ENCODE measurements at regions of chr6 and their contacts with region 1.

Region 1: GRCh38 chr6:5302995-5303622 is 41.8 kb downstream of the FARS2 start:
- DNase-seq: peak; percentile 5 to 77 (median 57)
- ATAC-seq: peak; percentile 88
- H3K4me3 ChIP-seq: no peak overlapping the region
- H3K4me3 Mint-ChIP-seq: peak overlapping the region; percentile 68
- H3K27ac ChIP-seq: peak overlapping the region in 1 of 2 experiments; percentile 1
- H3K27ac Mint-ChIP-seq: peak overlapping the region; percentile 37
- H3K4me1 ChIP-seq: peaks cover 6% of the 10 kb centered on the region
- H3K4me1 Mint-ChIP-seq: peaks cover 37% of the 10 kb centered on the region
- H3K27me3 ChIP-seq: no peaks in the 10 kb centered on the region
- H3K27me3 Mint-ChIP-seq: no peaks in the 10 kb centered on the region
- CTCF ChIP-seq: peak; percentile 51

Region 2: GRCh38 chr6:5151955-5152401 is 151.1 kb before region 1 on chr6:
- CTCF ChIA-PET with region 1: interaction called, 14 read pairs
- POLR2A ChIA-PET with region 1: interaction called, 3 read pairs
- intact Hi-C with region 1: no loop called
- DNase-seq: no peak
- ATAC-seq: no peak
- H3K4me3 ChIP-seq: no peak overlapping the region
- H3K4me3 Mint-ChIP-seq: no peak overlapping the region
- H3K27ac ChIP-seq: no peak overlapping the region
- H3K27ac Mint-ChIP-seq: no peak overlapping the region
- H3K4me1 ChIP-seq: no peaks in the 10 kb centered on the region
- H3K4me1 Mint-ChIP-seq: no peaks in the 10 kb centered on the region
- H3K27me3 ChIP-seq: no peaks in the 10 kb centered on the region
- H3K27me3 Mint-ChIP-seq: no peaks in the 10 kb centered on the region
- CTCF ChIP-seq: no peak

Region 3: DNA sequence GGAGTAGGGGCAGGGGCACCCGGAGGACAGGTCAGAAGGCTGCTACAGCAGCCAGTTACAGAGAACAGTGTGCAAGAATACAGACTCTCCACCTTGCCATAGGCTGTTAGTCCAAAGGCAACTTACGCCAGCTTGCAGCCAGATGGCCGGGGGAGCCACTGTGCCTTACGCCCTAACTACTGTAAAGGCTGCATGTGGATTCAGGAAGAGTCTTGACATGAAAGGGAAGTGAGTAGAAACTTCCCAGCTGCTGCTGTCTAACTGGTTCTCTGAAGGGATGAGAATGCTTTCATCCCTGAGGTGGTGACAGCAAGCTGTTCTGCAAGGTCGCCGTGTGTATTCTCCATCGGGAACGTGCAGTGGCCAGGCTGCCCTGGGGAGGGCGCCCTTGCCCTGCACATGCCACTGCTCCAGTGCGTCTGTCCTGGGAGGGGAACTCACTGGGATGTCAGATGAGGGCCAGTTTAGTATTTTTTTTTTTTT is 88.5 kb before region 1 on chr6:
- CTCF ChIA-PET with region 1: interaction called, 5 read pairs
- POLR2A ChIA-PET with region 1: no interaction called
- intact Hi-C with region 1: loop called in 1 of 2 experiments (anchors 5 kb)
- DNase-seq: peak in 2 of 9 experiments; percentile 7 to 13
- ATAC-seq: no peak
- H3K4me3 ChIP-seq: no peak overlapping the region
- H3K4me3 Mint-ChIP-seq: no peak overlapping the region
- H3K27ac ChIP-seq: no peak overlapping the region
- H3K27ac Mint-ChIP-seq: no peak overlapping the region
- H3K4me1 ChIP-seq: no peaks in the 10 kb centered on the region
- H3K4me1 Mint-ChIP-seq: peaks cover 4% of the 10 kb centered on the region
- H3K27me3 ChIP-seq: no peaks in the 10 kb centered on the region
- H3K27me3 Mint-ChIP-seq: no peaks in the 10 kb centered on the region
- CTCF ChIP-seq: no peak

Region 4: GRCh38 chr6:5315881-5316280 is 12.8 kb after region 1 on chr6:
- CTCF ChIA-PET with region 1: interaction called, 10 read pairs
- POLR2A ChIA-PET with region 1: no interaction called
- intact Hi-C with region 1: no loop called
- DNase-seq: no peak
- ATAC-seq: no peak
- H3K4me3 ChIP-seq: no peak overlapping the region
- H3K4me3 Mint-ChIP-seq: no peak overlapping the region
- H3K27ac ChIP-seq: no peak overlapping the region
- H3K27ac Mint-ChIP-seq: no peak overlapping the region
- H3K4me1 ChIP-seq: peaks cover 5% of the 10 kb centered on the region
- H3K4me1 Mint-ChIP-seq: peaks cover 28% of the 10 kb centered on the region
- H3K27me3 ChIP-seq: no peaks in the 10 kb centered on the region
- H3K27me3 Mint-ChIP-seq: no peaks in the 10 kb centered on the region
- CTCF ChIP-seq: no peak

Region 5: DNA sequence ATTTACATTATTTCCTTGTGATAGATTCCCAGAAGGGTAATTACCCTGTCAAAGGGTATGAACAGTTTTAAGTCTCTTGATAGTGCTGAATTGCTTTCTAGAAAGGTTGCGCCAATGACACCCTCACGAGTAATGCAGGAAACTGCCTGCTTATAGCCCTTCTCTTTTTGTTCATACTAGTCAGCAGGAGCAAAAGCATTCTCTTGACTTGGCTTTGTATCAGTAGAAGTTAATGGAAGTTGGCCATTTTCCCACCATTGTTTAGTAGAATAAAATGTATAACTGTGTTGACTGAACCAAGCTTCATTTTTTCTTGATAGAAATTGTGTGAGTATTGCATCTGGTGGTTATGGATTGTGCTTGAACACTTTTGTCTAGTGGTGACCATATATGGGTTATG is 58.3 kb after region 1 on chr6:
- CTCF ChIA-PET with region 1: no interaction called
- POLR2A ChIA-PET with region 1: no interaction called
- intact Hi-C with region 1: no loop called
- DNase-seq: no peak
- ATAC-seq: no peak
- H3K4me3 ChIP-seq: no peak overlapping the region
- H3K4me3 Mint-ChIP-seq: no peak overlapping the region
- H3K27ac ChIP-seq: no peak overlapping the region
- H3K27ac Mint-ChIP-seq: no peak overlapping the region
- H3K4me1 ChIP-seq: no peaks in the 10 kb centered on the region
- H3K4me1 Mint-ChIP-seq: peaks cover 11% of the 10 kb centered on the region
- H3K27me3 ChIP-seq: no peaks in the 10 kb centered on the region
- H3K27me3 Mint-ChIP-seq: no peaks in the 10 kb centered on the region
- CTCF ChIP-seq: no peak